ENCODE measurements at regions of chr4 and their contacts with region 1.

Region 1: DNA sequence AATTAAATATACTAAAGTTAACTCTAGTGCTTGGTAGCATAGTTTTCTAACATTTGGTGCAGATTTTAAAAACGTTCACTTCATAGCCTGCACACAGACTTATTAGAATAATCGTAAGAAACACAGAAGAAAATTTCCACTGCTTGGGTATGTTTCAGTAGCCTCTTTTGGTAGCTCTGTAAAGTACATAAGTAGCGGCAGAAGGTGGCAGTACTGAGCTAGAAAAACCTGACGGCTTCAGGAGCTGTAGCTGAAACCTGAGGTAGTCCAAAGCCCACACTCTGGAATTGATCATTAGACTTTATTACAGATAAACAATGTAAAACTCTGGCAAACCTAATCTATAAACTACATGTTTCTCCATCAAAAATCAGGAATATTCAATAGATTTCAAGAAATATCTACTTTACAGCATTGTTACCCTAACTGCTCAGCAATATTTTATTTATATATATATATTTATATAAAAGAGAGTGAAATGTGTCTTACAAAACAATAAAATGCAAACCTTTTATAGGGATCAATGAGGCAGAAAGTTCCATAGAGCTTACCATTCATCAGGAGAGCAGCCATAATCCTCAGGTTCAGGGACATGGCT is 88.2 kb downstream of the ATP8A1 start:
- DNase-seq: peak in 1 of 2 experiments; percentile 20
- H3K4me3 ChIP-seq: no peak overlapping the region
- H3K27ac ChIP-seq: no peak overlapping the region
- H3K4me1 ChIP-seq: no peaks in the 10 kb centered on the region
- H3K27me3 ChIP-seq: no peaks in the 10 kb centered on the region
- CTCF ChIP-seq: peak; percentile 76

Region 2: DNA sequence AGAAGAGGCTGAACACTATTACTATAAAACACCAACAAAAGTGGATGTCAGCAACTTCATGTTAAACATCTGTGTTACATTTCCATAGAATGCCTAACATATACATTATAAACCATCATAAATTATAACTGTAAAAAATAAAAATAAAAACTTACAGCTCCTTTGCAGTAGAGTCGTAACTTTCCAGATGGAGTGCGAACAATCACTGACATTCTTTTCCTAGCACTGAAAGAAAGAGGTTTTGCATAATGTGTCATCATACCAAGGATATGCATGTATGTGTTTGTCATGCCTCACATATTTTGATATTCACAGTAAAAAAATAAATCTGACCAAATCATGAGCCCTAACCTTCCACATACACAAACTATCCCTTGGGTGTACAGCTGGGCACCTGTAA is 24.9 kb before region 1 on chr4:
- CTCF ChIA-PET with region 1: no interaction called
- POLR2A ChIA-PET with region 1: no interaction called
- intact Hi-C with region 1: no loop called
- DNase-seq: no peak
- H3K4me3 ChIP-seq: no peak overlapping the region
- H3K27ac ChIP-seq: no peak overlapping the region
- H3K4me1 ChIP-seq: no peaks in the 10 kb centered on the region
- H3K27me3 ChIP-seq: peaks cover 4% of the 10 kb centered on the region; the same call in 1 of the 2 replicates
- CTCF ChIP-seq: no peak

Region 3: GRCh38 chr4:42865572-42866189 is 297.0 kb after region 1 on chr4:
- CTCF ChIA-PET with region 1: no interaction called
- POLR2A ChIA-PET with region 1: no interaction called
- intact Hi-C with region 1: loop called (anchors 1 kb)
- DNase-seq: peak; percentile 18 to 46
- H3K4me3 ChIP-seq: no peak overlapping the region
- H3K27ac ChIP-seq: no peak overlapping the region
- H3K4me1 ChIP-seq: no peaks in the 10 kb centered on the region
- H3K27me3 ChIP-seq: no peaks in the 10 kb centered on the region
- CTCF ChIP-seq: peak; percentile 80